MCF 10A (cell line): ENCODE measurements at regions of chr3 and their contacts with region 1.

Region 1: DNA sequence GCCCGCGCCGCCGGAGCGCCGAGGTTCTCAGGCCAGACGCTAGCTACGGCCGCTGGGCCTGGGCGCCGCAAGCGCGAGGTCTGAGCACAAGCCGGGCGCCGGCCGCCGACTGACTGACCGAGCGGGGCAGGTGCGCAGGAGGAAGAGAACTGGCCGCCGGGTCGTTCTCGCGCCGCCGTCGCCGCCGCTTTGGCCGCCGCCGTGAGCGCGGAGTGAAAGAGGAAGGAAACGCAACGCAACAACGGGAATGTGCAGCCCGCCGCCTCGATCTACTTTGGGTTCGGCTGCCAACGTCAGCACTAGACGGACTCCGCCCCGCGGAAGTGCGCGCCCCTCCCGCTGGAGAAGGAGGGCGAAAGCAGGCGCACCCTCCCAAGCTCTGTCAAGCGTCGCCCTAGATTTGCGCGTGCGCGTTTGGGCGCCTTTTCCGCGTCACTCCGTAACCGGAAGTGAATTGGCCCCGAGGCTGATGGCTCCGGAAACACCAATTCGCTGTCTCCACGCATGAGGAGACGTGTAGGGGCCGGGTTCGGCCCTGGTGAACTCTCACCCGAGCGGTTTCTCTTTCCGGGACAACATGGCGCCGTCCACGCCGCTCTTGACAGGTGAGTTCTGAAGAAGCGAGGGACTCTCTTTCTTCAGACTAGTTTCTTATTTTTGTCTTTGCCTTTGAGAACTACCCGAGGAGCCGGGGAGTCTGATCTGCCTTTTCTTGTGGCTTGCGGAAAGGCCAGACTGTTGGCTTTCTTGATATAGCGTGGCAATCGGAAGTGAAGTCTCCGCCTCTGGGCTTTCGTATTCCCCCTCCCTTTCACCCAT is at the starts of genes EIF2A and SERP1:
- DNase-seq: peak; percentile 99
- H3K4me3 Mint-ChIP-seq: peak within 1 kb of the TSS; percentile 83
- H3K27ac Mint-ChIP-seq: peak within 1 kb of the TSS; percentile 99
- H3K4me1 Mint-ChIP-seq: peaks cover 17% of the 10 kb centered on the region
- H3K27me3 Mint-ChIP-seq: no peaks in the 10 kb centered on the region
- CTCF ChIP-seq: no peak
- total RNA-seq, gene EIF2A: 112 and 117 TPM in 2 replicates
- total RNA-seq, gene SERP1: 227 and 308 TPM in 2 replicates

Region 2: DNA sequence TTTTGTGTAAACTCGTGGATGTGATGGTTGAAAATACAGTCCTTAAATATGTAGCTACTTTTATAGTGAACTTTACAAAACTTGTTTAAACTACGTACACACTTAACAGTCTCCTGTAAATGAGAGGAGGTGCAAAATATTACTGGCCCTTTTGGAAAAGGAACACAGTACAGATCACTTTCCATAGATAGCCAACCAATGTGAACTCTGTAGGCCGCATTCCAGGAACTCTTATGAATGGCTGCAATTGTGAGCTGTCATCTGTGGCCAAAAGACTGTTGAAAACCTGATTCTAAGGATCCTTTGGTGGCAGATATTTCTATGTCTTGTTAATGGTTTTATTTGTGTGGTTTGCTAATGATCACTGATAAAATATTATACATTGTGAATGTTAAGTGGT is 132.2 kb before region 1 on chr3:
- CTCF ChIA-PET with region 1: interaction called, 6 read pairs
- POLR2A ChIA-PET with region 1: interaction called, 106 read pairs
- intact Hi-C with region 1: no loop called
- DNase-seq: peak; percentile 66
- H3K4me3 Mint-ChIP-seq: peak overlapping the region; percentile 74
- H3K27ac Mint-ChIP-seq: peak overlapping the region; percentile 89
- H3K4me1 Mint-ChIP-seq: peaks cover 43% of the 10 kb centered on the region
- H3K27me3 Mint-ChIP-seq: no peaks in the 10 kb centered on the region
- CTCF ChIP-seq: no peak

Region 3: DNA sequence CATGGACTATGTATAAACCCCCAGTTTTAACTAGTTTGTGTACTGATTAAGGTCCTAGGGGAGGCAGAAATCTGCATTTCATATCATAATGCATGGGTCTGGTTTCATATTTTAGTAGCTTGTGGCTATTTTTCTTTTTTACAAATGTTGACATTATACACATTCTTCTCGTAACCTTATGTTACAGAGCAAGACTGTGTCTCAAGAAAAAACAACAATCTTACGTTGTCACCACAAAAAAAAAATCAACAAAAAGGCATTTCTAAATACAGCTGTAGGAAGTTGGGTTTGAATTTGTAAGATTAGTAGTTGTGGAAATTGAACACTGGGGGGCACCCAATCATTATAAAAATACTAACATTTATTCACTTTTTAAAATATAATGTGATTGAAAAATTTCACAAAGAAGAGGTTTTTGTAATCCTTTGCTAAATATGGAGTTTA is 18.1 kb before region 1 on chr3:
- CTCF ChIA-PET with region 1: interaction called, 4 read pairs
- POLR2A ChIA-PET with region 1: interaction called, 12 read pairs
- intact Hi-C with region 1: no loop called
- DNase-seq: peak; percentile 31
- H3K4me3 Mint-ChIP-seq: no peak overlapping the region
- H3K27ac Mint-ChIP-seq: no peak overlapping the region
- H3K4me1 Mint-ChIP-seq: no peaks in the 10 kb centered on the region
- H3K27me3 Mint-ChIP-seq: no peaks in the 10 kb centered on the region
- CTCF ChIP-seq: peak; percentile 41

Region 4: DNA sequence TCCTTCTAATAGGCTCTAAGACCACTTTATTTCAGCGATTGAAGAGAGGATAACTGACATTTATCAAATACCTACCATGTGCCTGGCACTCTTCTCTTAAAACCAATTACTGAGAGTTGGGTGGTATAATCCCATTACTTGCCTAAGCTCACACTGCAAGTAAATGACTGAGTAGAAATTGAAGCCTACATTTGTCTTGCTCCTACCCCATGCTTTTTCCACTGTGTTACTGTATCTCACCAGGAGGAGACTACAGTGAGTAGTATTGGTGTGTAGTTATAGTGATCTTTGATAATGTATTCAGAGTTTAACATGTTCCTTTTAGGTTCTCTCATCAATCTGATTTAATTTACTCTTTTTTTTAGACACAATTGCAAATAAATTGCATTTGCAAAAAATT is 20.9 kb after region 1 on chr3:
- CTCF ChIA-PET with region 1: interaction called, 3 read pairs
- POLR2A ChIA-PET with region 1: interaction called, 32 read pairs
- intact Hi-C with region 1: no loop called
- DNase-seq: no peak
- H3K4me3 Mint-ChIP-seq: no peak overlapping the region
- H3K27ac Mint-ChIP-seq: peak overlapping the region; percentile 7
- H3K4me1 Mint-ChIP-seq: no peaks in the 10 kb centered on the region
- H3K27me3 Mint-ChIP-seq: no peaks in the 10 kb centered on the region
- CTCF ChIP-seq: no peak

Region 5: DNA sequence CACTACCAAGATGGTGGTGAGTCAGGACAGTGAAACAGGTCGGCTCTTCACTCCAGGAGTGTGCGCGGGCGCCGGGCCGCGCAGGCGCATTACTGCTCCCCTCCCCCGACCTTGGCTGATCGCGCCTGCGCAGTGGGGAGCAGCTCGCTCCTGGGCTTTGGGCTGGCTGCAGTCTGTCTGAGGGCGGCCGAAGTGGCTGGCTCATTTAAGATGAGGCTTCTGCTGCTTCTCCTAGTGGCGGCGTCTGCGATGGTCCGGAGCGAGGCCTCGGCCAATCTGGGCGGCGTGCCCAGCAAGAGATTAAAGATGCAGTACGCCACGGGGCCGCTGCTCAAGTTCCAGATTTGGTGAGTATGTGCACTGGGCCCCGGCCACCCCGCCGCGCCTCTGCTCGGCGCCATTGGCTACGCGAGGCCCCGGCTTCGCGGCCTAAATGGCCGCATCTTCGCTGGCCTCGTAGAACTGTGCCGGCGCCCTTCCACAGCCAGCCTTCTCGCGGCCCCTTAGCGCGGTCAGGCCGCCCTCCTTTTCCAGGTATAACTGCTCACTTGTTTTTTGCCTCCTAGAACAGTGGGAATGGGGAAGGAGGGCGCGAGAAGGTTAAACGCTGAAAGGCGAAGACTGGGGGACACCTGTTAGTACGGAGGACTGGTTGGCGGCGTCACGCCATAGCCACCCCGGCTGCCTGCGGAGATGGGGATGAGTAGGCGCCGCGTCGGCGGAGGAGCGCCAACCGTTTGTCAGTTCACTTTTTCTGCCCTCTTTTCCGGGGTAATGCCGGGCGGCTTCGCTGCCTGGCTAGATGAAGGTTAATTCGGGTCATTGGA is 56.9 kb after region 1 on chr3 and contains the start of gene SELENOT:
- CTCF ChIA-PET with region 1: interaction called, 4 read pairs
- POLR2A ChIA-PET with region 1: interaction called, 69 read pairs
- intact Hi-C with region 1: no loop called
- DNase-seq: peak; percentile 97
- H3K4me3 Mint-ChIP-seq: peak within 1 kb of the TSS; percentile 92
- H3K27ac Mint-ChIP-seq: peak within 1 kb of the TSS; percentile 93
- H3K4me1 Mint-ChIP-seq: peaks cover 39% of the 10 kb centered on the region
- H3K27me3 Mint-ChIP-seq: no peaks in the 10 kb centered on the region
- CTCF ChIP-seq: peak; percentile 13
- total RNA-seq, gene SELENOT: 71.1 and 80.7 TPM in 2 replicates